T-cell (primary cell): ENCODE measurements at regions of chr20 and their contacts with region 1.

Region 1: GRCh38 chr20:3775457-3776108 is 5.7 kb downstream of the SPEF1 start:
- DNase-seq: no peak
- ATAC-seq: no peak
- H3K4me3 ChIP-seq: no peak overlapping the region
- H3K4me3 Mint-ChIP-seq: peak overlapping the region in 1 of 3 donors; percentile 79
- H3K27ac ChIP-seq: no peak overlapping the region
- H3K27ac Mint-ChIP-seq: no peak overlapping the region
- H3K4me1 ChIP-seq: peaks cover 8 to 24% of the 10 kb centered on the region in 2 experiments
- H3K4me1 Mint-ChIP-seq: peaks cover 13 to 25% (median 13%) of the 10 kb centered on the region in 3 donors
- H3K27me3 ChIP-seq: peaks cover 2 to 36% of the 10 kb centered on the region in 2 experiments
- H3K27me3 Mint-ChIP-seq: peaks cover 4 to 7% of the 10 kb centered on the region in 2 donors

Region 2: GRCh38 chr20:3502878-3503277 is 272.7 kb before region 1 on chr20:
- CTCF ChIA-PET with region 1: no interaction called
- POLR2A ChIA-PET with region 1: no interaction called
- DNase-seq: no peak
- ATAC-seq: no peak
- H3K4me3 ChIP-seq: no peak overlapping the region
- H3K4me3 Mint-ChIP-seq: no peak overlapping the region
- H3K27ac ChIP-seq: no peak overlapping the region
- H3K27ac Mint-ChIP-seq: no peak overlapping the region
- H3K4me1 ChIP-seq: no peaks in the 10 kb centered on the region
- H3K4me1 Mint-ChIP-seq: peaks cover 0 to 10% (median 3%) of the 10 kb centered on the region in 3 donors
- H3K27me3 ChIP-seq: no peaks in the 10 kb centered on the region
- H3K27me3 Mint-ChIP-seq: no peaks in the 10 kb centered on the region

Region 3: GRCh38 chr20:4026093-4026601 is 250.6 kb after region 1 on chr20:
- CTCF ChIA-PET with region 1: no interaction called
- POLR2A ChIA-PET with region 1: interaction called in 1 of 2 experiments, 10 read pairs
- DNase-seq: no peak
- ATAC-seq: no peak
- H3K4me3 ChIP-seq: no peak overlapping the region
- H3K4me3 Mint-ChIP-seq: no peak overlapping the region
- H3K27ac ChIP-seq: no peak overlapping the region
- H3K27ac Mint-ChIP-seq: no peak overlapping the region
- H3K4me1 ChIP-seq: no peaks in the 10 kb centered on the region
- H3K4me1 Mint-ChIP-seq: no peaks in the 10 kb centered on the region
- H3K27me3 ChIP-seq: peaks cover 0 to 16% of the 10 kb centered on the region in 2 experiments
- H3K27me3 Mint-ChIP-seq: peaks cover 8 to 14% of the 10 kb centered on the region in 2 donors

Region 4: DNA sequence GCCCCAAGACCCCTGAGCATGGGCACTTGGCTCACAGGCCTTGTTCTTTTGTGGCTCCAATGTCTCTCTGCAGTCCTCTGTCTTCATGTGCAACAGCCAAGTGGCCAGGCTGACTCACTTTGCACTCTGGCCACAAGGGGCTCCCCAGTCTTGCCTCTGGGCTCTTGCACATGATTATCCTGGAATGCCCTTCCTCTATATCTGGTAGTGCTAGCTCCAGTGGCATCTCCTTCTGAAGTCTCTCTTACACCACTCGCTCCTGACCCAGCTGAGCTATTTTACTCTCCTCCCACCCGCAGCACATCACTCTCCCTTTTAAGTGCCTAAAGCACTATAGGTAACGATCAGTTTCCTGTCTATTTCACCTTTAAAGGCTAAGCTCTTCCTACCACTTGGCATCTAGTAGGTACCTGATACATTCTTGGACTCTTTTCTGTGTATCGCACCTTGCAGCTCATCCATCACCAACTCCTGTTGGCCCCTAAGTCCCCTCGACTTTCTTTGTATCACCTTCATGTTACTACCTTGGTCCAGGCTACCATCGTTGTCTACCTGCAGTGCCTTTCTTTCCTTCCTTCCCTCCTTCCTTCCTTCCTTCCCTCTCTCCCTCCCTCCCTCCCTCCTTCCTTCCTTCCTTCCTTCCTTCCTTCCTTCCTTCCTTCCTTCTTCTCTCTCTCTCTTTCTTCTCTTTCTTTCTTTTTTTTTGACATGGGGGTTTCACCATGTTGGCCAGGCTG is 451.7 kb after region 1 on chr20:
- CTCF ChIA-PET with region 1: no interaction called
- POLR2A ChIA-PET with region 1: no interaction called
- DNase-seq: no peak
- ATAC-seq: no peak
- H3K4me3 ChIP-seq: no peak overlapping the region
- H3K4me3 Mint-ChIP-seq: no peak overlapping the region
- H3K27ac ChIP-seq: no peak overlapping the region
- H3K27ac Mint-ChIP-seq: no peak overlapping the region
- H3K4me1 ChIP-seq: no peaks in the 10 kb centered on the region
- H3K4me1 Mint-ChIP-seq: peaks cover 0 to 4% (median 3%) of the 10 kb centered on the region in 3 donors
- H3K27me3 ChIP-seq: peaks cover 0 to 39% of the 10 kb centered on the region in 2 experiments
- H3K27me3 Mint-ChIP-seq: peaks cover 24 to 28% of the 10 kb centered on the region in 2 donors